Endothelial cell of umbilical vein (primary cell): ENCODE measurements at regions of chr4 and their contacts with region 1.

Region 1: GRCh38 chr4:154854362-154854761 is 73.3 kb downstream of the RBM46 start:
- DNase-seq: no peak
- H3K4me3 ChIP-seq: no peak overlapping the region
- H3K27ac ChIP-seq: no peak overlapping the region
- H3K4me1 ChIP-seq: no peaks in the 10 kb centered on the region
- H3K27me3 ChIP-seq: no peaks in the 10 kb centered on the region
- CTCF ChIP-seq: no peak
- POLR2A ChIP-seq: no peak

Region 2: GRCh38 chr4:155353923-155354540 is 499.7 kb after region 1 on chr4:
- CTCF ChIA-PET with region 1: no interaction called
- POLR2A ChIA-PET with region 1: no interaction called
- dilution Hi-C with region 1: no loop called
- intact Hi-C with region 1: loop called (anchors 5 kb)
- DNase-seq: peak; percentile 76
- H3K4me3 ChIP-seq: no peak overlapping the region
- H3K27ac ChIP-seq: no peak overlapping the region
- H3K4me1 ChIP-seq: no peaks in the 10 kb centered on the region
- H3K27me3 ChIP-seq: no peaks in the 10 kb centered on the region
- CTCF ChIP-seq: peak; percentile 82 to 83
- POLR2A ChIP-seq: no peak

Region 3: DNA sequence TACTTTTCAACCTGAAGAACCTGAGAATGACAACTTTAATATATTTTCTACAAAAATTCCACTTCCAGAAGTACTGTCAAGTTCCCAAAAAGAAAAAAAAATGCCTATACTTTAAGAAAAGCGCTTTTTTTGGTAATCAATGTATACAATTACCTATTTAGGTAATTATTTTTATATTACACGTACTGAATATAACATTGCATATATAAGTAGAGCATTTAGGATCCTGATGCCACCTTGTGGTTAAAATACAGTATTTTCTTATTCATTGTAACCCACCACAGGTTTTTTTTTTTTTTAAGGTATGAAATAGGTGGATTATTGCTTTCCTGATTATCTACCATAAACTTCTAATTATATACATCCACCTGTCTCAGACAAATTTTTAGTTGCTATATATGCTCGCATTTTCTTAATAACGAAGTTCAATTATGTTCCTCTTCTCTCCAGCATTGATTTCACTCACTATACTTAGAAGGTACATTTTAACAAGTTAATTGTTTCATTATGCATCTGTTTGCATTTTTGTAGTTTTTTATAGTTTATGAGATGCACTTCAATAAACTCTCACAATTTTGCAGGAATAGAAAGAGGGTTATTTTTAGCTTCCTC is 517.2 kb after region 1 on chr4:
- CTCF ChIA-PET with region 1: interaction called, 3 read pairs
- POLR2A ChIA-PET with region 1: no interaction called
- dilution Hi-C with region 1: no loop called
- intact Hi-C with region 1: loop called (anchors 2 kb)
- DNase-seq: peak; percentile 38
- H3K4me3 ChIP-seq: no peak overlapping the region
- H3K27ac ChIP-seq: no peak overlapping the region
- H3K4me1 ChIP-seq: peaks cover 4% of the 10 kb centered on the region
- H3K27me3 ChIP-seq: peaks cover 0 to 6% of the 10 kb centered on the region in 2 experiments
- CTCF ChIP-seq: peak in 1 of 2 donors; percentile 17
- POLR2A ChIP-seq: no peak